K562 (cell line): ENCODE measurements at regions of chr11 and their contacts with region 1.

Region 1: DNA sequence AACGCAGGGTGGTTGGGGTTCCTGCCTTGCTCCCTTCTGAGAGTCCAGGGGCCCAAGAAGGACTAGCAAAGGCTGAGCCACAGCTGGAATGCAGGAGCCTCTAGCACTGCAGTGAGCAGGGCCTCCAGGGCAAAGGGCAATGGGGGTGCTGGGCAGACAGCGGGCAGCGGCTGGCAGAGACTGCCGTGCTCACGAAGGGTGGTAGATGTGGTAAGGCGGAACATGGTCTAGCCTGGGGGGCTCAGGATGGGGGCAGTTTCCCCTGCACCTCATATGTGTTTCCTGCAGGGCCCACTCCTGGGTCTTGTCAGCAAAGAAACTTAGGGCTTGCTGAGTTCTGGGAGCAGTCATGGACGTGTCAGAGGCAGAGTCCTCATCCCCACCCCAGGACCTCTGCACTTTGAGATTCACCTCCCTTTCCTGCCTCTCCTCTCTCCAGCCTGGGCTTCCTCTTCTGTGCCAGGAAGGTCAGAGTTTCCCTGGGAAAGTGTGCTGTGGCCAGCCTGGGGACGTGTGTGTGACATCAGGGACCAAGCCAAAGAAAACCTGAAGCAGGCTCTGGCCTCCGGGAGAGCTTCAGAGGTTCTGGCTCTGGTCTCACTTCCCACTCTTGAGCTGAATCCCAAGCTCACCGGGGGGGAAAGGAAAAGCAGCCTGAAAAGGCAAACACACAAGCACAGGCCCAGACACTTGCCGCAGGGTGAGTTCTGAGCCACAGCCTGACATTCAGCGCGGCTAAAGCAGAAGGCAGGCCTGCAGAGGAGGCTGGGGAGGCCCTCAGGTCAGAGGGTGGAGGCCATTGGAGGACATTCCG is 4.4 kb downstream of the MOGAT2 start:
- DNase-seq: no peak
- ATAC-seq: no peak
- H3K4me3 ChIP-seq: no peak overlapping the region
- H3K27ac ChIP-seq: no peak overlapping the region
- H3K4me1 ChIP-seq: peaks cover 3 to 6% of the 10 kb centered on the region in 2 experiments; a peak in 2 of 5 replicates
- H3K27me3 ChIP-seq: peaks cover 0 to 11% of the 10 kb centered on the region in 2 experiments; a peak in 2 of 5 replicates
- CTCF ChIP-seq: no peak
- EP300 ChIP-seq: no peak
- POLR2A ChIP-seq: no peak
- RAD21 ChIP-seq: no peak

Region 2: GRCh38 chr11:75768112-75768908 is 46.2 kb after region 1 on chr11 and contains the start of gene DGAT2:
- CTCF ChIA-PET with region 1: interaction called, 10 read pairs
- POLR2A ChIA-PET with region 1: no interaction called
- in situ Hi-C with region 1: no loop called
- intact Hi-C with region 1: loop called (anchors 1 kb)
- DNase-seq: peak; percentile 90 to 94 (median 93)
- ATAC-seq: peak; percentile 96
- H3K4me3 ChIP-seq: peak within 1 kb of the TSS; percentile 45
- H3K27ac ChIP-seq: peak within 1 kb of the TSS; percentile 93
- H3K4me1 ChIP-seq: peaks cover 22 to 33% of the 10 kb centered on the region in 2 experiments
- H3K27me3 ChIP-seq: peaks cover 7 to 10% of the 10 kb centered on the region in 2 experiments; a peak in 4 of 5 replicates
- CTCF ChIP-seq: peak; percentile 54 to 86 (median 59)
- EP300 ChIP-seq: no peak
- POLR2A ChIP-seq: no peak
- RAD21 ChIP-seq: peak; percentile 10 to 64; a peak in 3 of 4 replicates
- polyA plus RNA-seq, gene DGAT2: 0.68 to 0.69 TPM

Region 3: GRCh38 chr11:75802913-75803820 is 81.1 kb after region 1 on chr11:
- CTCF ChIA-PET with region 1: no interaction called
- POLR2A ChIA-PET with region 1: no interaction called
- in situ Hi-C with region 1: no loop called
- intact Hi-C with region 1: loop called (anchors 1 kb)
- DNase-seq: peak; percentile 77 to 82 (median 80)
- ATAC-seq: peak; percentile 96
- H3K4me3 ChIP-seq: no peak overlapping the region
- H3K27ac ChIP-seq: no peak overlapping the region
- H3K4me1 ChIP-seq: 0 out of 5 replicates have a peak, but pooled peaks cover 0 to 3% of the 10 kb centered on the region in 2 experiments
- H3K27me3 ChIP-seq: no peaks in the 10 kb centered on the region
- CTCF ChIP-seq: peak; percentile 88 to 93 (median 88)
- EP300 ChIP-seq: no peak
- POLR2A ChIP-seq: no peak
- RAD21 ChIP-seq: peak; percentile 84 to 91

Region 4: DNA sequence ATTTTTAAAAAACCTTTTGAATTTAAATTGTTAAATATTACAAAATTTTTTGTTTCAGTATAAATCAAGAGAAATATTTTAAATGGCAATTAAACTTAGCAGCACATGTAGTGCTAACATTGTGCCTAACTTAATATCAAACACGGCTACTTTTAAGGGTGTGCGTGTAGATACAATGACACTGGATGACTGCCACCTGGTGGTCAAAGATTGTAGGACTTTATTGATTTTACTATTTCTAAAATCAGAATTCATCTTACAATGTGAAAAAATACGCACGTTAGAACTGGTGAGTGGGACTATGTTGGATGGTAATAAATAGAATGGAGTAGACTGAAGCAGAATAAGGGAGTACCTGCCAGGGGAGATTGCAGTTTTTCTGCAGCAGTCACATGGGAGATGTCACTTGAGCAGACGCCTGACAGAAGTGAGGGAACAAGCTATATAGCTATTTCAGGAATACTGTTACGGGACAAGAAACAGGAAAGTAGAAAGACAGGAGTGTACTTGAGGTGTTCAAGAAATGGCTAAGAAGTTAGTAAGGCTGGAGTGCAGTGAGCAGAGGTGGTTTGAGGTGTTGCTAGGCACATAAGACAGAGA is 145.8 kb after region 1 on chr11:
- CTCF ChIA-PET with region 1: interaction called, 5 read pairs
- POLR2A ChIA-PET with region 1: no interaction called
- in situ Hi-C with region 1: loop called (anchors 10 kb)
- intact Hi-C with region 1: loop called (anchors 1 kb)
- DNase-seq: peak; percentile 50 to 66 (median 57)
- ATAC-seq: peak; percentile 77
- H3K4me3 ChIP-seq: no peak overlapping the region
- H3K27ac ChIP-seq: no peak overlapping the region
- H3K4me1 ChIP-seq: no peaks in the 10 kb centered on the region
- H3K27me3 ChIP-seq: no peaks in the 10 kb centered on the region
- CTCF ChIP-seq: peak; percentile 60 to 84 (median 70); a peak in 5 of 6 replicates
- EP300 ChIP-seq: no peak
- POLR2A ChIP-seq: no peak
- RAD21 ChIP-seq: peak; percentile 77 to 84

Region 5: GRCh38 chr11:76025068-76025467 is 303.0 kb after region 1 on chr11:
- CTCF ChIA-PET with region 1: no interaction called
- POLR2A ChIA-PET with region 1: no interaction called
- in situ Hi-C with region 1: no loop called
- intact Hi-C with region 1: no loop called
- DNase-seq: no peak
- ATAC-seq: no peak; the same call in 2 of the 3 replicates
- H3K4me3 ChIP-seq: no peak overlapping the region
- H3K27ac ChIP-seq: no peak overlapping the region
- H3K4me1 ChIP-seq: peaks cover 0 to 19% of the 10 kb centered on the region in 2 experiments; a peak in 2 of 5 replicates
- H3K27me3 ChIP-seq: no peaks in the 10 kb centered on the region
- CTCF ChIP-seq: no peak
- EP300 ChIP-seq: no peak
- POLR2A ChIP-seq: no peak
- RAD21 ChIP-seq: no peak